Vagina (tissue), 2 donors: ENCODE measurements at regions of chr12 and their contacts with region 1.

Region 1: DNA sequence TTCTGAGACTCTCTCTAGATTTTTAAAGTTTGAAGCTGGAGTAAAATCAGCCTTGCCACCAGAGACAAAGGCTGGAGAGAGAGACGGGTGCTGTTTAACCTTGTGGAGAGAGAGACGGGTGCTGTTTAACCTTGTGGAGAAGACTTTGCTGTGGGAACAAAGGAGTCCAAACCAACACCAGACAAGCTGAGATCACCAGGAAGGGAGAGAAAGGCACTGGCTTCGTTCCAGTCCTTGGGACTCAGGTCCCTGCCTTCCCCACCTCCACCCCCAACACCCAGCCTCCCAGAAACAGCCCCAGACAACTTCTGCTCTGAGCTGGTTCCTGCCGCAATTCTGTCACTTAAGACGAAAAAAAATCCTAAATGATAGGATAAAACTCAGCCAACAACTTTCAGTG is 1389.3 kb downstream of the AACS start:
- DNase-seq: no peak
- H3K4me3 ChIP-seq: no peak overlapping the region
- H3K27ac ChIP-seq: no peak overlapping the region
- H3K4me1 ChIP-seq: no peaks in the 10 kb centered on the region
- H3K27me3 ChIP-seq: no peaks in the 10 kb centered on the region
- CTCF ChIP-seq: no peak
- POLR2A ChIP-seq: no peak

Region 2: DNA sequence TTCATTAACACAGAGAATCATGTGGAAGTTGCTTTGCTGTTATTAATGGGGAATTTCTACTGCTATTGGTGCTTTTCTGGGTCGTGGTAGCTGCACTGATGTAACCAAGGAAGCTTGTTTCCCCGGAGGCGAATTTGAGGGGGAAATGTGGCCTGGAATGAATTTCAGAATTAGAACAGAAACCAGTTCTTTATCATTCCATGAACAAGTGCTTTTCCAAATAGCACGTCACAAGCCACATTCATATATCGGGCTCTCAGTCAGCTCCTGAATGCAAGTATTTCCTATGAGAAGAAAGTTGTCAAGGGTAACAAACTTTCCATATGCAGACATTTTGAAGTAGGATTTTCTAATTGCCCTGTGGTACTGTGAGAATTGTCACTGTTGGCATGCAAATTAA is 36.2 kb before region 1 on chr12:
- intact Hi-C with region 1: loop called (anchors 2 kb)
- DNase-seq: no peak
- H3K4me3 ChIP-seq: no peak overlapping the region
- H3K27ac ChIP-seq: no peak overlapping the region
- H3K4me1 ChIP-seq: no peaks in the 10 kb centered on the region
- H3K27me3 ChIP-seq: no peaks in the 10 kb centered on the region
- CTCF ChIP-seq: no peak
- POLR2A ChIP-seq: no peak